Stomach (tissue), 19 donors: ENCODE measurements at regions of chrX and their contacts with region 1.

Region 1: DNA sequence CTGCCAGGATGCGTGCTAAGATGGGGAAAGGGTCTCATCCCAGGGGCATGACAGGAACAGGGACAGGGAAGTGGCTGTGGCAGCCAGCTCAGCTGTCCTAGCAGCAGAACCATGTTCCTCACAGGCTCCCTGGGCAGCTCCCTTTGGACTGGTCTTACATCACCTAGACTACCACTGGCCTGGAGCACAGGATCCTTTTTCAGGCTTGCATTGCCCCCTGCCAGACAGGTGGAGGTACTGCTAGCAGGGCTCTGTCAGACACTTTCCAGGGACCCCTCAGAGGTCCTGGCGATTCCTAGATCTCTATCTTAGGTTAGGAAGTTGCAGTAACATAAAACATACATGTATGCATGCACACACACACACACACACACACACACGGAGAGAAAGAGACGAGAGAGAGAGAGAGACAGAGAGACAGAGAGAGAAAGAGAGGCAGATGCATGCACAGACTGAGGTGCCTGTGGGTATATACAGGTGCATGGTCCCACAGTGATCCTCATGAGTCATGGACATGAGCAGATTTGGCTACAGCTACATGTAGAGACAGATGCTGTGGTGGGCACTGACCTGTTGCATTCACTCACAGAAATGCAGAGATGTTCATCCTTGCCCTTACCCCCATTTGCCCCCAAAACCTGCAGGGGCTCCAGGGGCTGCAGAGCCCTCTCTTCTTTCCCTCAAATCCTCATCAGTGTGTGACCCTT is 63.6 kb downstream of the STARD8 start:
- DNase-seq: peak; percentile 52 to 70
- H3K4me3 ChIP-seq: no peak overlapping the region
- H3K27ac ChIP-seq: no peak overlapping the region
- H3K4me1 ChIP-seq: no peaks in the 10 kb centered on the region
- H3K27me3 ChIP-seq: peaks cover 0 to 4% (median 0%) of the 10 kb centered on the region in 3 donors
- CTCF ChIP-seq: peak in 5 of 7 experiments; percentile 32 to 61 (median 41)
- EP300 ChIP-seq: no peak
- POLR2A ChIP-seq: no peak

Region 2: GRCh38 chrX:68196939-68197791 is 513.9 kb before region 1 on chrX:
- intact Hi-C with region 1: loop called (anchors 10 kb)
- DNase-seq: peak in 1 of 2 donors; percentile 82
- H3K4me3 ChIP-seq: no peak overlapping the region
- H3K27ac ChIP-seq: no peak overlapping the region
- H3K4me1 ChIP-seq: no peaks in the 10 kb centered on the region
- H3K27me3 ChIP-seq: no peaks in the 10 kb centered on the region
- CTCF ChIP-seq: peak in 5 of 7 experiments; percentile 34 to 73 (median 54)
- EP300 ChIP-seq: no peak
- POLR2A ChIP-seq: no peak

Region 3: DNA sequence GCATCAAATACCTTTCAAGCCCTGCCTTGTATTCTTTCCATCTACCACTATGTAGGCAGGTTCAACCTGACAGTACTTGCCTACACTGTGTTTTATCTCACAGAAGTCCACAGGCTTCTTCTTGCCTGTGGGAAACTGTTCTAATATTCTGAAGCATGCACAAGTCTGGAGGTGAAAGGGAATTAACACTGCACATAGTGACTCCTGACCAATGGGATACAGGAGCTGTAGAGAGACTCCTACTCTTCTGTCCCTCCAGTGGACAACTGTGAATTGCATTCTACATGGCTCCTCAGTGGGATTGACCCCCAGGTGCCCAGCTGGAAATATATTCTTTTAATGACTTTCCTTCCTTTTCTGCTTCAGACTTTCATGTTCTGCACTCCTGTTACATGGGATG is 220.4 kb before region 1 on chrX:
- intact Hi-C with region 1: no loop called
- DNase-seq: peak in 1 of 2 donors; percentile 56
- H3K4me3 ChIP-seq: no peak overlapping the region
- H3K27ac ChIP-seq: no peak overlapping the region
- H3K4me1 ChIP-seq: no peaks in the 10 kb centered on the region
- H3K27me3 ChIP-seq: no peaks in the 10 kb centered on the region
- CTCF ChIP-seq: peak in 3 of 7 experiments; percentile 12 to 42 (median 30)
- EP300 ChIP-seq: no peak
- POLR2A ChIP-seq: no peak

Region 4: DNA sequence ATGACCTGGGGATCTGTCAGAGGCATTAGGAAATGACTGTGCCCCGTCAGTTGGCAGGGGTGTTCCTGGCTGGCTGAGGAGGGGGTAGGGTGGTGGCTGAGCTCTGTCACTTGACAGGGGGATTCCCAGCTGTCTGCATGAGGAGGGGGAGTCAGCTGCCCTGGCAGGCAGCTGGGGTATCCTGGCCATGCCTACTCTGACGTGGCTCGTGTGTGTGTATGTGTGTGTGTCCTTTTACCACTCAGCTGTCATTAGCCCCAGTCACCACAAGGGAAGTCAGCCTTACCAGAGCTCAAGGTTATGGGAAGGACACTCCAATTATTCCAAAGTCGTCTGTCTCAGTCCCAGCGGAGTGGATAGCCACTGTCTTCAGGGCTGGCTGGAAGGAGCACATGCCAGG is 211.0 kb after region 1 on chrX:
- intact Hi-C with region 1: no loop called
- DNase-seq: no peak
- H3K4me3 ChIP-seq: no peak overlapping the region
- H3K27ac ChIP-seq: no peak overlapping the region
- H3K4me1 ChIP-seq: no peaks in the 10 kb centered on the region
- H3K27me3 ChIP-seq: peaks cover 0 to 3% (median 0%) of the 10 kb centered on the region in 3 donors
- CTCF ChIP-seq: no peak
- EP300 ChIP-seq: no peak
- POLR2A ChIP-seq: no peak

Region 5: DNA sequence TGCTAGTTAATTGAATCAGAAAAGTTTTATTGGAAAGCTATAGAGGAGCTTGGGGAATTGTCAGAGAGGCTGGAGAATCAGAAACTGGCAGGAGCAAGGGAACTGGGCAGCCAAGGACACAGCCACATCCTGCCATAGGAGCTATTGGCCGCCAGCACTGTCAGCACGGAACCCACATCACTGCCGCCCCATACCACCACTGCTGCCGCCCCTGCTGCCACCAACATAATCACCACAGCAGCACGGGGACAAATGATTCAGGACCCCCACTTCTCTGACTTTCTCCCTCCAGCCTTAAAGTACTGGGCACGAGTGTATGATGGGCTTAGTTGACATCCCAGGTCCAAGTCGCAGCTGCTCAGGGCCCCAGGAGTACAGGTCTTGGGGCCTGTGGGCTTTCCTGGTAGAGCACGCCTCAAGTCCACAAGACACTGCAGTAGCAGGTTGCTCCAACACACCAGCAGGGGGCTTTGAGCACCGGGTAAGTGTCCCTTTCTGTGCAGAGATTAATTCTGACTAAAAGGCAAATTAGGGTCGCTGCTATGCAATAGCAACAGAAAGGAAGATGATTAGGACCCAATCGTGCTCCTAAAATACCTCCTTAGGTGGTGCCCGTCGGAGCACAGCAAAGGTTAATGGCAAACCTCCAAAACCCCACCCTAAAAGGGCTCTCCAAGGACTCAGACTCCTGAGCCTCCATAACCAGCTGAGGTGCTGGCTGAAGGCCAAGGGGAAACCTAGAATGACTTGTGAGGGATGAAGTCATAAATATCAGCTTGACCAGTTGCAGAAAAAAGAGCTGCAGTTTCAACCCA is 447.4 kb after region 1 on chrX:
- intact Hi-C with region 1: no loop called
- DNase-seq: peak; percentile 69 to 86
- H3K4me3 ChIP-seq: no peak overlapping the region
- H3K27ac ChIP-seq: peak overlapping the region in 1 of 5 donors; percentile 12
- H3K4me1 ChIP-seq: peaks cover 0 to 16% (median 5%) of the 10 kb centered on the region in 4 donors
- H3K27me3 ChIP-seq: peaks cover 0 to 4% (median 0%) of the 10 kb centered on the region in 3 donors
- CTCF ChIP-seq: peak in 4 of 7 experiments; percentile 14 to 34 (median 20)
- EP300 ChIP-seq: no peak
- POLR2A ChIP-seq: no peak